ENCODE measurements at regions of chr21 and their contacts with region 1.

Region 1: DNA sequence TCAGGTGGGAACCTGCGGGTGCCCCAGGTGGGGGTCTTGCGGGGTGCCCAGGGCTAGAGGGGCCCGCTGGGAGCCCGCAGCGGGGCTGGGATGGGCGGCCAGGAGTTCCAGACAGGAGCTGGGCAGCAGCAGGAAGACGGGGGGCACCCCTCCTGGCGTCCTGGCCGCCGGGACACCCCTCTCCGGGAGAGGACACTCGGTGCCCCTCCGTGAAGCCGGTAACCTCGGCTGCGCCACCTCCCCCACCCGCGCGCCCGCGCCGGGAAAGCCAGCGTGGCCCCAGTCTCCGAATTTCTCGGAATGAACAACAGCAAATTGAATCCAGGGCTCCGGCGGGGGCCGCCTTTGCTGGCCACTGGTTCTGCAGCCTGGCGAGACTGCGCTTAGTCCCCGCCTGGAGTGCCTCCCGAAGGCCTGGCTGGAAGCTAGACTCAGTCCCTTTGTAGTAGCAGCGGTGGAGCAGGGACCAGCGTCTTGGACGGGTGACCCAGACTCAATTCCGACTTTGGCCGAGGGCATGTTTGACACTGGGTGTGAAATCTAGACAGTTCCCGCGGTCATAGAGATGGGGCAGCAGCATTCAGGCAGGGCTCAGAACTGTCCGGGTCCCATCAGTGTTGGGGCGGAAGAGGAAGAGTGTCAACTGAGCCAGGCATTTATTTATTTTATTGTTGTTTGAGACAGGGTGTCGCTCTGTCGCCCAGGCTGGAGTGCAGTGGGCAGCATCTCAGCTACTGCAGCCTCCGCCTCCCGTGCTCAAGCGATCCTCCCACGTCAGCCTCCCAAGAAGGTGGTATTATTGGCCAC is 769 bp downstream of the IFNGR2 start:
- DNase-seq: peak; percentile 59
- H3K4me3 Mint-ChIP-seq: peak overlapping the region; percentile 90
- H3K27ac Mint-ChIP-seq: peak overlapping the region; percentile 81
- H3K4me1 Mint-ChIP-seq: peaks cover 40% of the 10 kb centered on the region
- H3K27me3 Mint-ChIP-seq: peaks cover 16% of the 10 kb centered on the region

Region 2: GRCh38 chr21:32520875-32521735 is 882.9 kb before region 1 on chr21:
- CTCF ChIA-PET with region 1: no interaction called
- POLR2A ChIA-PET with region 1: no interaction called
- intact Hi-C with region 1: no loop called
- DNase-seq: no peak
- H3K4me3 Mint-ChIP-seq: no peak overlapping the region
- H3K27ac Mint-ChIP-seq: no peak overlapping the region
- H3K4me1 Mint-ChIP-seq: no peaks in the 10 kb centered on the region
- H3K27me3 Mint-ChIP-seq: no peaks in the 10 kb centered on the region

Region 3: DNA sequence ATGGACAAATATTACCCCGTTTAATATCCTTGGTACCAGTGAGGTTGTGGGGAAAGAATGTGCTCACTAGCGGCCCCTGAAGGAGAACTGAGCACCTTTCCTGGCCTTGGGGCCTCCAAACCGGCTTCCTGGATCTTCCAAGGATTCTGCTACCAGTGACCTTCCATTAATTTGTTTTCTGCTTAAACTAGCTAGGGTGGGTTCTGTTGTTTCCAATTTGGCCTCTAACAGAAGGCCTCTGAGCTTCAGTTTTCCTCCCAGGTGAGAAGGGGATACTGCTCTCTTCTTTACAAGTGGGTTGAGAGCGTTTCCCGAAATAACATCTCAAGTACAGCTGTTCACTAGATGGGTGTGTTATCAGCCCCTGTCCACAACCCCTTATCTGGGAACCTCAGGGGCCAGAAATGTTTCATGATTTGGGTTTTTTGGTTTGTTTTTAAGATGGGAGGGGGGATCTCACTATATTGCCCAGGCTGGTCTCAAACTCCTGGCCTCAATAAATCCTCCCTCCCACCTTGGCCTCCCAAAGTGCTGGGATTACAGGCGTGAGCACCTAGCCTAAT is 17.7 kb before region 1 on chr21:
- CTCF ChIA-PET with region 1: interaction called, 6 read pairs
- POLR2A ChIA-PET with region 1: interaction called, 10 read pairs
- intact Hi-C with region 1: loop called (anchors 1 kb)
- DNase-seq: no peak
- H3K4me3 Mint-ChIP-seq: no peak overlapping the region
- H3K27ac Mint-ChIP-seq: no peak overlapping the region
- H3K4me1 Mint-ChIP-seq: peaks cover 41% of the 10 kb centered on the region
- H3K27me3 Mint-ChIP-seq: peaks cover 16% of the 10 kb centered on the region

Region 4: DNA sequence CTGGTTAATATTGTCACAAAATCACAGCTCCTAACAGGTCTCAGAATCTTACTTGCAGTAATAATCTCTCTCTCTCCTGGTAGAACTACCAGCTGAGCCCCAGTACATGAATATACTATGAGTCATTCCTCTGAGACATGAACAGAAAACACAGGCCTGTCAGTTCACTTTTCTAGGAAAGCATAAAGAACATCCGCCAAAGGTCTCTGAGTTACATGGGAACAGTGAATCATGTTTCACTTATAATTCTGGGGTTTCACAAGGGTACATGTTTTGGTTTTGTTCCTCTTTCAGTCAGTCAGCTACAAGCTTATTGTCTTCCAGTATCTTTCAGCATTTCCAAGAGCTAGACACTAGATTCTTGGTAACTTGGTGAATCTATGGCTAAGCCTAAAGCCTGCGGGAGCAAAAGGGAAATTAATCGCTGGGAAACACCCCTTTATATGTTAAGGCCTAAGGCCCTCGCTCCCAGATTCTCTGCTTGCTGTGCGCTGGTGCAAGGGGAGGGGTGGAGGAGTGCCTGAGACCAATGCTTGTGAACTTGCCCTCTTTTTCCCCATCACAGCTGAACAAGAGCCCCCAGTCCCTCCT is 30.9 kb after region 1 on chr21:
- CTCF ChIA-PET with region 1: interaction called, 11 read pairs
- POLR2A ChIA-PET with region 1: interaction called, 18 read pairs
- intact Hi-C with region 1: loop called (anchors 1 kb)
- DNase-seq: peak; percentile 44
- H3K4me3 Mint-ChIP-seq: peak overlapping the region; percentile 28
- H3K27ac Mint-ChIP-seq: peak overlapping the region; percentile 76
- H3K4me1 Mint-ChIP-seq: peaks cover 27% of the 10 kb centered on the region
- H3K27me3 Mint-ChIP-seq: no peaks in the 10 kb centered on the region

Measured in activated CD4-positive, alpha-beta memory T cell treated with anti-CD3 and anti-CD28 coated beads for 36 hours (primary cell).